ENCODE measurements at regions of chr6 and their contacts with region 1.

Region 1: DNA sequence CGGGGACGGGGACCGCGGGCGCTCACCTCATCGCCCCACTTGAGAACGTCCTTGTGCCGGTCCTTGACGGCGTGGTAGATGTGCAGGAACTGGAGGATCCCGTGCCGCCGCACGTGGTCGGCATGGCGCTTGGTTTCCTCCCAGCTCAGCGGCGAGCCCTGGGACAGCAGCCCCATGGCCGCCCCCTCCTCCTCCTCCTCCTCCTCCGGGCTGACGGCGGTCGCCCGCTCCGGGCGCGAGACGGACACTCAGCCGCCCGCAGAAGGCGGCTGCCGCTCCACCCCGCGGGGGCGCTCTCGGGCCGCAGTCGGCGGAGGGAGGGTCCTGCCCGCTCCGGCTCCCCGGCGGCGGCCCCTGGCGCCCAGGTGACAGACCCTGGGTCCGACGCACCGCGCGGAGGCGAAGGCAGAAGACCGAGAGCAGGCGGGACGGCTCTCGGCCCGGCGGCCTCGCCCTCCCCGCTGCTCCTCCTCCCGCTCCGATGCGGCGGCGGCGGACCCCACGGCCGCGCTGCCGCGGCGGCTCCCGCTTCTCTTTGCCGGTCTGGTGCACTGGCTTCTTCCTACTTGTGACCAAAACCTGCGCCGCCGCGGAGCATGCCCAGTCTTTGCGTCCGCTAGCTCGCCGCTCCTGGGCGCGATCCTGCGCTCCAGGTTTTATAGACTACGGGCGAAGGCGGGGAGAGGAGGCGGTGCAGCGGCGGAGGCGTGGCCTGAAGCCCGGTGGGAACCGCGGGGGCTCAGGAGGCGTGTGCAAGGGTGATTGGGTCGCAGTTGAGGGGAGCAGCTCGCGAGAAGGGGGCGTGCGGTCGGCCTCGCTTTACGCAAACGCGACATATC is at the start of gene GCLC:
- DNase-seq: peak; percentile 79 to 97 (median 93)

Region 2: GRCh38 chr6:53335208-53335994 is 209.3 kb before region 1 on chr6:
- intact Hi-C with region 1: no loop called
- DNase-seq: no peak

Region 3: GRCh38 chr6:53391170-53391569 is 153.5 kb before region 1 on chr6:
- intact Hi-C with region 1: no loop called
- DNase-seq: peak in 6 of 42 donors; percentile 6 to 47 (median 24)

Region 4: GRCh38 chr6:53492860-53493634 is 51.6 kb before region 1 on chr6:
- intact Hi-C with region 1: loop called (anchors 10 kb)
- DNase-seq: peak in 5 of 42 donors; percentile 14 to 67 (median 41)

Region 5: GRCh38 chr6:53635322-53635721 is 90.6 kb after region 1 on chr6:
- intact Hi-C with region 1: loop called (anchors 5 kb)
- DNase-seq: peak in 27 of 42 donors; percentile 25 to 77 (median 44)

Region 6: GRCh38 chr6:53725791-53726431 is 181.2 kb after region 1 on chr6:
- intact Hi-C with region 1: loop called (anchors 5 kb)
- DNase-seq: peak; percentile 65 to 93 (median 86)